ENCODE measurements at regions of chr9 and their contacts with region 1.

Region 1: DNA sequence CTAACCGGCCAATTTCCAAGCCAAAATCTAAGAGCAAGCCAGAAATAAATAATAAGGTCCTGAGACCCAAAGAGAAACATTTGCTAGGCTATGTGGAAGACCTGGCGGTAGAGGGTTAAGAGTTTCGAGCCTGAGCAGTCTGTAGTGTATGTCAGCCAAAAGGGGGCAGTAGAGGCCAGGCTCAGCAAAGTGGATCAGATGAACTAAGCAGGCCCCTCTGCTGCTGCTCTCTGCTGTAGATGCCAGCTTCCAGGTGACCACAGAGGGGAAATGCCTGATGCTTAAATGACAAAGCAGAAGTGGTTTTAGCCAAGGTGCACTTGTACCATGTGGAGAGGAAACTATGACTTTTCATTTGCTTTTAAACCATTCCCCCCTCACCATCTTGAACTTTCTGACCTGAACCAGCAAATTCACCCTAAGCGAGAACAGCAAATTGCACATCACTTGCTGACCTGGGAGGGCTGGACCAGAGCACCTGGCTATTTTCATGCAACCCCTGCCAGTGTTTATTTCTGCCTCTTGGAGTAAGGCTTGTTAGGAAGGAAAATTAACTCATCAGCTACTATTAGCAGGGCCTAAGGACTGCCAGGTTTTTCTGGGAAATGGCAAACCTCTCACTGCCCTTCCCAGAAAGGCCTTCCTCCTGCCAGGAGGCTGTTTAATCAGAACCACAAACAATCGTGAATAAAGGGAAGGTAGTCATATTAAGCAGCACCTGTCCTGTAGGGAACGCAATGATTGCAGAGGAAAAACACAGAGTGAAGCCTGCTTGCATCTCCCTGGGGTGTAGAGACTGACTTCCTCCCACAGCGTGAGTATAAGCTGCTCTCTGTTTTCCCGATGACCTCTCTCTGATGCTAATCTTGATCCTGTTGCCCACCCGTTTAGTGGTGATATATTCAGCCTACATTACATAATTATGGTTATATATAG is 818.2 kb downstream of the TLR4 start:
- DNase-seq: peak; percentile 73
- H3K4me3 Mint-ChIP-seq: no peak overlapping the region
- H3K27ac Mint-ChIP-seq: no peak overlapping the region
- H3K4me1 Mint-ChIP-seq: no peaks in the 10 kb centered on the region
- H3K27me3 Mint-ChIP-seq: no peaks in the 10 kb centered on the region
- CTCF ChIP-seq: peak; percentile 77

Region 2: DNA sequence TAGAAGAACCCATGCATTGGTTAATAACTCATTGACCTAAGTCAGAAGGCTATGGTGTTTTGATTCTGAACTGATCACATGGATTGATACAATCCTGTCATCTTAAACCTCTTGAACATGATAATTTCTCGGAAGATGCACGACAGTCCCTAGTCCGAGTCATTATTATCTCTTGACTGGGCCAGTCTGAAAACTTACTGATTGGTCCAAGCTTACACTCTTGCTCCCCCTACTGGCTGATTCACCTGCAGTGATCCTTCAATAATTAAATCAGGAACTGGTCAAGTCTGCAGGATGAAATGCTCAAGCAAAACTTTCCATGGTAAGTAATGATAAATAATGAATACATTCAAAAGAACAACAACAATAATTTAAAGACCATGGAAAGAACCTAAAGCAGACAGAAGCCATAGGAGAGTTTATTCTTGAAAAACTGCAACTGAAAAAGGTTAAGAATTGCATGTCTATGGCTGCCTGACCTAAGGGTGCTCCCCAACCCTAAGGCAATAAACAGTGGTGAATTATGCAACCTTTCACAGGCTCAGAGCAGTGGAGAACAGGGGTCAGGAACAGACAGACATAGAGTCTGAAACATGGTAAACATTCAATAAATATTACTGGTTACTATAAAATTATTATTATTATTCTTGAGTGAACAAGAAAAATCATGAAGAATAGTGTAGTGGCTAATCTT is 767.5 kb after region 1 on chr9:
- CTCF ChIA-PET with region 1: no interaction called
- POLR2A ChIA-PET with region 1: no interaction called
- intact Hi-C with region 1: loop called (anchors 5 kb)
- DNase-seq: peak; percentile 66
- H3K4me3 Mint-ChIP-seq: no peak overlapping the region
- H3K27ac Mint-ChIP-seq: no peak overlapping the region
- H3K4me1 Mint-ChIP-seq: no peaks in the 10 kb centered on the region
- H3K27me3 Mint-ChIP-seq: no peaks in the 10 kb centered on the region
- CTCF ChIP-seq: peak; percentile 23

Region 3: DNA sequence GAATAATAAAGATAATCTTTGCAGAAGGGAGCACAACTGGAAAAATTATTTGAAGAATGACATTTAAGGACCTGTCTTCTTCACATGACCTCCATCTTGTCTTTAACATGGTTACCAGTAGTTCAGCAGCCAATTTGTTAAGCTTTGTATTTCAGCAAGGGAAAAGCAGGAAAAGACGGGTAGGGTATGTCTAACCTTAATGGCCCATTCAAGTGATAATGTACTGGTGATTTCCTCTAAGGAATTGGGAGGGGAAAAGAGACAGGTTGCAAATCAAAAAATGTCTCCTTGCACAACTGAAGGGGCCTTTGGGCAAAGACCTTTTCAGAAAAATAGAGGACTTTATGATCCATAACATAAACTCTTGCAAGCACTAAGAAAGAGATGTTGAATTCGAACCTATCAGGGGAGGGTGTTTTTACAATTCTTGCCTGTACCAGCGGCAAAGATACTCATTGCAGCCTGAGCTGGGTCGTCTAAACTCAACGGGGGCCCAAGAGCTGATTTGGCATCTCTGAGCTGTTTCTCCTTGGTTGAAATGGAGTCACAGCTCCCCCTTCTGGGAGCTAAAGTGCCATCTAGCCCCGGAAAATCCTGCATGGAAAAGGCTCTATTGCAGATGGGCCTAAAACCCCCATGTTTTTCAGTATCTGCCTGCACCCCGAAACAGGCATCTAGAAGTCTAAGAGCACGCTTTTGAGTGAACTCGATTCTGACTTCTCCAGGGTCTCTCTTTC is 843.1 kb after region 1 on chr9:
- CTCF ChIA-PET with region 1: no interaction called
- POLR2A ChIA-PET with region 1: no interaction called
- intact Hi-C with region 1: loop called (anchors 2 kb)
- DNase-seq: peak; percentile 53
- H3K4me3 Mint-ChIP-seq: no peak overlapping the region
- H3K27ac Mint-ChIP-seq: no peak overlapping the region
- H3K4me1 Mint-ChIP-seq: no peaks in the 10 kb centered on the region
- H3K27me3 Mint-ChIP-seq: peaks cover 16% of the 10 kb centered on the region
- CTCF ChIP-seq: peak; percentile 57

Measured in MCF 10A (cell line).